Mammary epithelial cell (primary cell): ENCODE measurements at regions of chr3 and their contacts with region 1.

Region 1: DNA sequence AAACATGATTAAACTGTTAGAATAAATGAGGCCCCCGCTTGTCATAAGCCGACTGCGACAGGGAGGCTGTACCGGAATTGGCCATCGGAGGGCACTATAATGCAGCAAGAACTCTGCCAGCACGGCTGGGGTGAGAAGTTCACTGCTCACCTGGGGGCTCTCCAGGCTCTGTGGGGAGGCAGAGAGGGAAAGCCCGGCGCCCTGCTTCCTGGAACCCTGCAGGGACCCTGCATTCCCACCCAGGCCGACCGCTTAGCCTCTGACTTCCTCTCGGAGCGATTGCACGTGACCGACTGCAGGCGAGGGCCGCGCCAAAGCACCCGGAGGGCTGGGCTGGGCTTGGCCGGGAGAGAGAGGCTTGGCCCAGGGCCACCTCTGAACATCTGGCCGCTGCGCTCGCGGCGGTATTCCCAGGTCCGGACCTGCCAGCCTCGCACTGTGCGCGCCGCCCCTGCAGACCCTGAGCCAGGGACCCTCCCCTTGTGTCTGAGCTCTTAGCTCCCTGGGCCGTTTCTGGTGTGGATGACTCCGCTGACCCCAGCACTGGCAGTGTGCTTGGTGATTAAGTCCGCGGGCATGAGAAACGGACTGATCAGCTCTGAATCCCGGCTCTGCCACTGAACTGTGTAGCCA is 26.2 kb downstream of the DRD3 start:
- DNase-seq: peak; percentile 72
- H3K4me3 ChIP-seq: peak overlapping the region; percentile 32 to 56 (median 49)
- H3K27ac ChIP-seq: no peak overlapping the region
- H3K4me1 ChIP-seq: peaks cover 5% of the 10 kb centered on the region
- H3K27me3 ChIP-seq: no peaks in the 10 kb centered on the region
- CTCF ChIP-seq: peak; percentile 93 to 94

Region 2: GRCh38 chr3:114034787-114035545 is 117.7 kb before region 1 on chr3:
- CTCF ChIA-PET with region 1: no interaction called
- dilution Hi-C with region 1: no loop called
- in situ Hi-C with region 1: no loop called
- intact Hi-C with region 1: no loop called
- DNase-seq: no peak
- H3K4me3 ChIP-seq: no peak overlapping the region
- H3K27ac ChIP-seq: no peak overlapping the region
- H3K4me1 ChIP-seq: no peaks in the 10 kb centered on the region
- H3K27me3 ChIP-seq: no peaks in the 10 kb centered on the region
- CTCF ChIP-seq: no peak

Region 3: DNA sequence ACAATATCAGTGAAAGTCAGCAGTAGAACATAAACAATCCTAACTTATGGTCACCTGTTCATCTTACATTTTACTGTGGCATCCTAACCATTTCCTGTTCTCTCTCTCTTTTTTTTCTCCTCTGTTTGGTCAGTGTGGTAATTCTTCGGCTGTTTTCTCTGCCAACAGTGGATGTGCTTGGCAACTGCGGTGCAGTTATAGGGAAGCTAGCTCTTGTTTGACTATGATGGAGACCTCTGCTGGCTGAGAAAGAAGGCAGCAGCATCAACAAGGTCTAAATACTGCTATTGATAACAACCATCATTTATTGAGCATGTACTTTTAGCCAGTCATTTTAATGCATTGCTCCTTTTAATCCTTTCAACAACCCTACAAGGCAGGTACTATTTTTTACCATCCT is 26.9 kb after region 1 on chr3:
- CTCF ChIA-PET with region 1: interaction called, 10 read pairs
- dilution Hi-C with region 1: no loop called
- in situ Hi-C with region 1: no loop called
- intact Hi-C with region 1: loop called (anchors 1 kb)
- DNase-seq: peak; percentile 42
- H3K4me3 ChIP-seq: no peak overlapping the region
- H3K27ac ChIP-seq: no peak overlapping the region
- H3K4me1 ChIP-seq: no peaks in the 10 kb centered on the region
- H3K27me3 ChIP-seq: no peaks in the 10 kb centered on the region
- CTCF ChIP-seq: peak; percentile 19 to 43

Region 4: GRCh38 chr3:114260152-114260551 is 107.5 kb after region 1 on chr3:
- CTCF ChIA-PET with region 1: no interaction called
- dilution Hi-C with region 1: no loop called
- in situ Hi-C with region 1: no loop called
- intact Hi-C with region 1: no loop called
- DNase-seq: no peak
- H3K4me3 ChIP-seq: no peak overlapping the region
- H3K27ac ChIP-seq: no peak overlapping the region
- H3K4me1 ChIP-seq: no peaks in the 10 kb centered on the region
- H3K27me3 ChIP-seq: no peaks in the 10 kb centered on the region
- CTCF ChIP-seq: no peak

Region 5: DNA sequence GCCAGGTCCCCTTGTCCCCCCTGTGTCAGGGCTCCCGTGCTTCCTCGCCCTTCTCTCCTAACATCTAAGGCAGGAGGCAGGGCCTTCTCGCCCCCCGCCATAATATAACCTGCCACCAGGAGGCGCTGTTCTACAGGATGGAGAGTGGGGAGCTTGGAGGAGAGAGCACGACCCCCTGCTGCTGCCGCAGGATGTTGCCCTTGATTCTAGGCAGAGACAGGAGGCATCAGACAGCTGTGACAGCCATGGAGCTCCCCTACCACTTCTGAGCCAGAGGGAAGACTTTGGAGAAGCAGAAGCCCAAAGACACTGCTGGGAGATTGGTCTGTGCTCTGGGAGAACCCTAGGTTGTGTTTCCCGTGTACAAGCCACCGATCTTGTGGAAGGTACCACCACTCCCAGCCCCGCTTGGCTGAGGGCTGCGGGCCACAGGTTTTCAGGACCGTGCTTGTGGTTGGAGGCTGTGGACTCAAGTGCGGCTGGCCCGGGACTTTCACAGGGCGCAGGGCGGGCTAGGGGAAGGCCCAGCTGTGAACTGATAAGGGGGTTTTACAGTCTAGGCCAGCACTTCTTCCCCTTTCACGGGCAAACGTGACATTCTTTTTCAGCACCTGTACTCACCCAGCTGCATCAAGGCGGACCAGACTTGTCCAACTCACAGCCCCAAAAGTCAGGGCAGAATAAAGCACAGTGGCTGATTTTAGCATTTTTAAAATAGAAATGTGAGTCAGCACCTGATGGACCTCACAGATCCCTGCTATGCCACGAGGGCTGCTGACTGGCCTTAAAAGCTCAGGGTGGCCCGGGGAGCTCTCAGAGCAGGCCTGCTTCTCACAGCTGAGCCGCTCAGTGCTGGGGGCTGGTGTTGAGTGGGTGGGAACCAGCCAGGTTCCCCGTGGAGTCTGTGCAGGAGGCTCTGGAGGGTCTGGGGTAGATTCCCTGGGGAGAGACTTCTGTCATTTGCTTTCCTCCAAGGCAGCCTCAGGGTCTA is 138.6 kb after region 1 on chr3:
- CTCF ChIA-PET with region 1: no interaction called
- dilution Hi-C with region 1: no loop called
- in situ Hi-C with region 1: no loop called
- intact Hi-C with region 1: loop called (anchors 10 kb)
- DNase-seq: peak; percentile 14
- H3K4me3 ChIP-seq: no peak overlapping the region
- H3K27ac ChIP-seq: no peak overlapping the region
- H3K4me1 ChIP-seq: no peaks in the 10 kb centered on the region
- H3K27me3 ChIP-seq: no peaks in the 10 kb centered on the region
- CTCF ChIP-seq: peak; percentile 75 to 83

Region 6: DNA sequence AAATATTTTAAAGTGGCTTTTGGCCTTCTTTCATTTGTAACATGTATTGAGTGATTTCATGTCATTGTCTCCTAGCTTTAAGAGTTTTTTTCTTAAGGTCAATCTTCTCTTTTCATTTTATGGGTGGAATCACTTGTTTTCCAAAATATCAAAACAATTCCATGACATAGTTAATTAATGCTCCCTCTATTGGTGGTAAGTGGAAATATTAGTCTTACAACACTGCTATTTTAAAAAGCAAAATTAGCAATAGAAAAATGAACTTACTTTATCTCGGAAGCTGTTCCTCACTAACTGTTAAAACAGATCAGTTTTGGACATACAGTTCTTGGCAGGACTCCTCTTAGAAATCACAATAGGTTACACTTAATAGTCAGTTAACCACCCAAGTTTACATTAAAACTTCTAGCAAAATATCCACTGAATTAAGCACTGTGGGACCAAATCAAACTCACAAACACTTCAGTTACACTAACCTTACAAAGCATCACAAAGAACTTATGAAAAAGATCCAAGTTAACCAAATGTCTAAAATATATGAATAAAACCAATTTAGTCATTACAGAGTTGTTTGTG is 183.6 kb after region 1 on chr3:
- CTCF ChIA-PET with region 1: no interaction called
- dilution Hi-C with region 1: no loop called
- in situ Hi-C with region 1: no loop called
- intact Hi-C with region 1: loop called (anchors 5 kb)
- DNase-seq: no peak
- H3K4me3 ChIP-seq: no peak overlapping the region
- H3K27ac ChIP-seq: no peak overlapping the region
- H3K4me1 ChIP-seq: no peaks in the 10 kb centered on the region
- H3K27me3 ChIP-seq: no peaks in the 10 kb centered on the region
- CTCF ChIP-seq: peak; percentile 47 to 50